Breast epithelium (tissue), 4 donors: ENCODE measurements at regions of chr6 and their contacts with region 1.

Region 1: GRCh38 chr6:62707156-62707555 is 421.1 kb upstream of the KHDRBS2 start:
- DNase-seq: no peak
- H3K4me3 ChIP-seq: no peak overlapping the region
- H3K27ac ChIP-seq: no peak overlapping the region
- H3K4me1 ChIP-seq: no peaks in the 10 kb centered on the region
- H3K27me3 ChIP-seq: no peaks in the 10 kb centered on the region
- CTCF ChIP-seq: no peak
- POLR2A ChIP-seq: no peak

Region 2: DNA sequence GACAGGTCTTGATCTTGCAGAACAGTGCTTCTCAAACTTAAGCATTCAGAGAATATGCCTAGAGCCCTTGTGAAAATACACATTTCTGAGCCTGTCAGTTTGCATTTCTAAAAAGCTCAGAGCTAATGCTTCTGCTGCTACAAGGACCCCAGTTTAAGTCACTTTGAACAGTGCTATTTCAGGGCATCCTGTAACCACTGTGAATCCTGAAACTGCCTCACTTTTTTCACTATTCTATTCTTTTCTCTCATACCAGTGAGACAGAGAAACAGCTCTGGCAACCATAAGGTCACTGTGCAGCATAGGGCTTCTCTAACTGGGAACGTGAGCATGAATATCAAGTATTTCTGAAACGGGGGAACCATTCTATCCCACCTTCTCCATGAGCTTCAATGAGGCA is 561.4 kb after region 1 on chr6:
- intact Hi-C with region 1: loop called (anchors 5 kb)
- DNase-seq: no peak
- H3K4me3 ChIP-seq: no peak overlapping the region
- H3K27ac ChIP-seq: no peak overlapping the region
- H3K4me1 ChIP-seq: no peaks in the 10 kb centered on the region
- H3K27me3 ChIP-seq: no peaks in the 10 kb centered on the region
- CTCF ChIP-seq: no peak
- POLR2A ChIP-seq: no peak

Region 3: DNA sequence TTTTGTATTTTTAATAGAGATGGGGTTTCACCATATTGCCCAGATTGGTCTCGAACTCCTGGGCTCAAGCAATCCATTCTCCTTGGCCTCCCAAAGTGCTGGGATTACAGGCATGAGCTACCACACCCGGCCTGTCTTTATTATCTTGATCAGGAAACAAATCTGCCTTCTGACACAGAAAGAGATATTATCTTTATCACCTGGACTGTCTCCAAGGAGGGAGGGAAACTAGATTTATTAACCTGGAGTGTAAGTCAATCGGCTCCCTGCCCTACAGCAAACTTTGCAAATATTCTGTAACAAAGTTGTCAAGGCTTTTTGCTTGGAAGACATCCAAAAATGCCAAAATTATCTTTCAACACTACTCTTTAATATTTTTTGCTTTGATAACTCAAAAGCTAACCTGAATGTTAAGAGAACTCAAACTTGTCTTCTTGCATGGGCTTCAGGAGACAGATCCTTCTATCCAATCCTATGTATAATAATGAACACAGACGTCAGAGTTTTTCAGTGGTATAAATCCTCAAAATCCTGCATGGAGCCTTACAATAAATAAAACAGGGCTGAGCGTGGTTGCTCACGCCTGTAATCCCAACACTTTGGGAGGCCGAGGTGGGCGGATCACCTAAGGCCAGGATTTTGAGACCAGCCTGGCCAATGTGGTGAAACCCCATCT is 780.1 kb after region 1 on chr6:
- intact Hi-C with region 1: no loop called
- DNase-seq: no peak
- H3K4me3 ChIP-seq: no peak overlapping the region
- H3K27ac ChIP-seq: no peak overlapping the region
- H3K4me1 ChIP-seq: no peaks in the 10 kb centered on the region
- H3K27me3 ChIP-seq: no peaks in the 10 kb centered on the region
- CTCF ChIP-seq: no peak
- POLR2A ChIP-seq: no peak